Colonic mucosa (tissue), 4 donors: ENCODE measurements at regions of chr14 and their contacts with region 1.

Region 1: DNA sequence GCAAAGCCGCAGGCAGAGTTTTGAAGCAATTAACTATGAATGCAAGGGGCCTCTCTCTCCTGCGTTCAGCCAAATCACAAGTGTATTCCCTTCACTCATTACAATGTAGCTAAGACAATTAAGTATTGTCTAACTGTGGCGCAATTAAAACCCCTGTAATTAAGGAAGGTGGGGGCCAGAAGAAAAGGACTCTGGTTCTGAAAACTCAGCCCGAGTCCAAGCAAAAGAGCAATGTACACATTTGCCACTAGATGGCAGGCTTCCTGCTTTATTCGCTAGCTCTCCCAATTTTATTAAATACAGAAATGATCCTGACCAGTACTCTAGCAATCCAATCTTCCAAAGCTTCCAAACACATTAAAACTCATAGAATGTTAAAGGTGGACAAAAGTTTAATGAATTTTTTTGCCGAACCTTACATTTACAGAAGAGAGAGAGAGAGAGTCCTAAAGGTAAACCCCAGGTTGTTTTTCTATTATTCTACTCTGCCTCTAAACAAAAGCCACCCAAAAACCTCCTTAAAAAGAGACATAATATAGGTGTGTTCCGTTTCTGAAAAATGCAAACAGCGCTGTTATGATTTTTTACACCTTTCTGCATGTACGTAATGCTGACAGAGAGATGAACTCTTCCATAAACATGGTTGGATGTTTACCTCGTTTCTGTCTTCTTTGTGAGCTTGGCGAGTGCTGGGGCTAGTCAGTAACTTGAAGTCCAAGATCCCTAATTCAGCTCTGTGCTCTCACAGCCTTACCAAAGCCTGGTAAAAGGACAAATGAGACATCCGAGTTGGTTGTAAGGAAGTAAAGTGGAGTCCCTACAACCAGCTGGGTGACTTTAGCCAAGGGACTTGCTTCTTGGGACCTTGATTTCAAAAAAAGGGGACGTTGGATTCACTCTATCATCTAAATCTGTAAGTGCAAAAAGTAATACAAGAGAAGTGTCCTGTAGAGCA is 50.9 kb upstream of the VASH1 start:
- DNase-seq: peak; percentile 22
- H3K4me3 ChIP-seq: no peak overlapping the region
- H3K27ac ChIP-seq: no peak overlapping the region
- H3K4me1 ChIP-seq: no peaks in the 10 kb centered on the region
- H3K27me3 ChIP-seq: no peaks in the 10 kb centered on the region
- CTCF ChIP-seq: peak; percentile 79

Region 2: DNA sequence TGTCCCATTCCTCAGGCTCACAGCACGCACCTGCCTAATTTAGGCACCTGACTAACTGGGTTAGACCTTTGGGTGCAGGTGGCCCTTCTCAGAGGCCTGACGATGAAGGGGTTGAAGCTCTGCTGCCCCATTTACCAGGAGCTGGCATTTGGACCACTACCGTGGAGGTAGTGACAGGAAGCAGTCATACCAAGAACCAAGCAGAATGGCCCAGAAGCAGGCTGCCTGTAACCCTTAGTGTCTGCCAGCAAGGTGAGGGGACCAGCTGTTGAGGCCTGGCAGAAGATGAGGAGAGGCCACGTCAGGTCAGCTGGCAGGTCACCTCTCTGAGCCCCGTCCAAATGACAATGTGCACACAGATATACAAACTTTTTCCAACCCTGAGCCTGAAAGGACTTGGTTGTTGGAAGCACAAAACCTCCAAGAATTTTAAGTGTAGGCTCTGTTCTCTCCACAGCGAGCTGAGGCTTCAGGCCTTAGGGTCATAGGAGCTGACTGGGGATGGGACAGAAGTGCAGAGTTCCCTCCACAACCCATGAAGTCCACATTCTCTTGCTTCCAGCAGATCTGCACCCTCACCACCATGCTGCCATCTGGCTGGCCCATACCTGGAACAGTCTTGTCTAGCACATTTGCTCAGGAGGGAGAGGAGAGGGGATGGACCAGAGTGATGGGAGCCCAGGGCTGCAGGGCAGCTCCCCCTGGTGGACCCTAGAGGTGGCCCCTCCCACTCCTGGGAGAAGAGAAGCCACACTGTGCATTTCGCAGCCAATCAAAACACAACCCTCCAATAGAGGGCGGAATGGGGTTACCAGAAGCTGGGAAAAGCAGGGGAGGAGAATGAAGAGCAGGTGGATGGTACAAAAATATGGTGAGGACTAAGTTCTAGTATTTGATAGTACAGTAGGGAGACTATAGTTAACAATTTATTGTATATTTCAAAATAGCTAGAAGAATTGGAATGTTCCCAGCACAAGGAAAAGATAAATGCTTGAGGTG is 74.2 kb after region 1 on chr14:
- intact Hi-C with region 1: loop called (anchors 10 kb)
- DNase-seq: peak; percentile 64
- H3K4me3 ChIP-seq: no peak overlapping the region
- H3K27ac ChIP-seq: no peak overlapping the region
- H3K4me1 ChIP-seq: no peaks in the 10 kb centered on the region
- H3K27me3 ChIP-seq: no peaks in the 10 kb centered on the region
- CTCF ChIP-seq: peak; percentile 53

Region 3: GRCh38 chr14:76863724-76864407 is 153.5 kb after region 1 on chr14:
- intact Hi-C with region 1: loop called (anchors 10 kb)
- DNase-seq: no peak
- H3K4me3 ChIP-seq: no peak overlapping the region
- H3K27ac ChIP-seq: peak overlapping the region; percentile 36
- H3K4me1 ChIP-seq: no peaks in the 10 kb centered on the region
- H3K27me3 ChIP-seq: no peaks in the 10 kb centered on the region
- CTCF ChIP-seq: no peak

Region 4: GRCh38 chr14:76977793-76978720 is 267.7 kb after region 1 on chr14:
- intact Hi-C with region 1: no loop called
- DNase-seq: no peak
- H3K4me3 ChIP-seq: no peak overlapping the region
- H3K27ac ChIP-seq: no peak overlapping the region
- H3K4me1 ChIP-seq: no peaks in the 10 kb centered on the region
- H3K27me3 ChIP-seq: no peaks in the 10 kb centered on the region
- CTCF ChIP-seq: no peak